ENCODE measurements at regions of chr6 and their contacts with region 1.

Region 1: GRCh38 chr6:45428727-45429126 is 51.0 kb upstream of the SUPT3H start:
- DNase-seq: no peak
- ATAC-seq: no peak
- H3K4me3 ChIP-seq: no peak overlapping the region
- H3K27ac ChIP-seq: no peak overlapping the region
- H3K4me1 ChIP-seq: peaks cover 6% of the 10 kb centered on the region
- H3K27me3 ChIP-seq: no peaks in the 10 kb centered on the region
- CTCF ChIP-seq: no peak
- POLR2A ChIP-seq: no peak
- RAD21 ChIP-seq: no peak

Region 2: DNA sequence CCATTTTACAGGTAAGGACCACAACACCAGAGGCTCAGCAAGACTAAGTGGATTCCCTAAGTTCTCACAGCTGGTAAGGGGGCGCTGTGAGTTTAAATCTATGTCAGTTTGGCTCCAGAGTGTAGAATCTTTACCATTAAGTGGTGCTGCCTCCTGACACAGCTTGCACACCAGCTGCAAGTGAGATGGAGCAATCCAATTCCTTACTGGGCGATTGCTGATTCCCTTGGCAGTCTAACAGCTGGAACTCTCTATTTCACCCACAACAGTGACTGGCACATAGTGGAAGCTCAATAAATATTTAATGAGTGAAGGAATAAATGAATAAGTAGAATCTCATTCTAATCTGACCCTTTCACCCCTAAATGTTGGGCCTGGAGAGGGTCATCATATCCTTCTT is 410.3 kb after region 1 on chr6:
- CTCF ChIA-PET with region 1: no interaction called
- POLR2A ChIA-PET with region 1: interaction called, 10 read pairs
- dilution Hi-C with region 1: no loop called
- in situ Hi-C with region 1: no loop called
- intact Hi-C with region 1: no loop called
- DNase-seq: no peak
- ATAC-seq: no peak
- H3K4me3 ChIP-seq: no peak overlapping the region
- H3K27ac ChIP-seq: no peak overlapping the region
- H3K4me1 ChIP-seq: no peaks in the 10 kb centered on the region
- H3K27me3 ChIP-seq: peaks cover 13% of the 10 kb centered on the region
- CTCF ChIP-seq: no peak
- POLR2A ChIP-seq: no peak
- RAD21 ChIP-seq: no peak